Posterior cingulate gyrus (tissue), 11 donors: ENCODE measurements at regions of chr6 and their contacts with region 1.

Region 1: GRCh38 chr6:129498950-129499842 is 210.8 kb downstream of the ARHGAP18 start:
- DNase-seq: no peak

Region 2: GRCh38 chr6:129448965-129449364 is 50.2 kb before region 1 on chr6:
- intact Hi-C with region 1: no loop called
- DNase-seq: no peak

Region 3: GRCh38 chr6:129575378-129576118 is 76.4 kb after region 1 on chr6:
- intact Hi-C with region 1: loop called (anchors 1 kb)
- DNase-seq: no peak

Region 4: GRCh38 chr6:129748212-129748900 is 249.2 kb after region 1 on chr6:
- intact Hi-C with region 1: loop called (anchors 10 kb)
- DNase-seq: no peak